B cell (primary cell): ENCODE measurements at regions of chr22 and their contacts with region 1.

Region 1: GRCh38 chr22:29603358-29604075 is at the start of gene NF2:
- DNase-seq: peak; percentile 99
- ATAC-seq: peak; percentile 97
- H3K4me3 ChIP-seq: peak within 1 kb of the TSS; percentile 82 to 99 (median 95)
- H3K4me3 Mint-ChIP-seq: peak within 1 kb of the TSS; percentile 98
- H3K27ac ChIP-seq: peak within 1 kb of the TSS; percentile 81 to 92
- H3K27ac Mint-ChIP-seq: peak within 1 kb of the TSS; percentile 97
- H3K4me1 ChIP-seq: peaks cover 9 to 15% of the 10 kb centered on the region in 2 donors
- H3K4me1 Mint-ChIP-seq: peaks cover 20% of the 10 kb centered on the region
- H3K27me3 ChIP-seq: no peaks in the 10 kb centered on the region
- H3K27me3 Mint-ChIP-seq: no peaks in the 10 kb centered on the region
- CTCF ChIP-seq: no peak
- total RNA-seq, gene NF2: 26.6 and 27.7 TPM in 2 replicates

Region 2: DNA sequence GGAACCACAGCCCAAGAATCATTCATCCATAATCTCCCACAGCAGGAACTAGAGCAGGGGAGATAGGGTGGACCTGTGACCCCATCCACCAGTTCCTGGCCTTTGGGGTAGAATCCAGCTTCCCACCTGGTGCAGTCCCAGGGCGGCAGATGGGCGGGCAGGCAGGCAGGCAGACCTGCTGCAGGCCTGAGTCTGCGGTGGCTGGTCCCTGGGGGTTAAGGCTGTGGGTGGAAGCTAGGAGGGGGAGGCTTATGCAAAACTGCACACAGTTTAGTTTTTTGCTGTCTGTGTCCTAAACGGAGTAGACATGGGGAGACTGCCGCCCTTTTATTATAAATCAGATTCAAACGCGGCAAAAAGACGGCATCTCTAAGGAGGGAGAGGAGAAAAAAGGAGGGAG is 128.0 kb before region 1 on chr22:
- CTCF ChIA-PET with region 1: no interaction called
- POLR2A ChIA-PET with region 1: no interaction called
- intact Hi-C with region 1: loop called (anchors 1 kb)
- DNase-seq: peak; percentile 73
- ATAC-seq: peak; percentile 94
- H3K4me3 ChIP-seq: no peak overlapping the region
- H3K4me3 Mint-ChIP-seq: peak overlapping the region; percentile 35
- H3K27ac ChIP-seq: no peak overlapping the region
- H3K27ac Mint-ChIP-seq: peak overlapping the region; percentile 34
- H3K4me1 ChIP-seq: peaks cover 31 to 33% of the 10 kb centered on the region in 2 donors
- H3K4me1 Mint-ChIP-seq: peaks cover 45% of the 10 kb centered on the region
- H3K27me3 ChIP-seq: peaks cover 0 to 49% (median 25%) of the 10 kb centered on the region in 4 experiments
- H3K27me3 Mint-ChIP-seq: peaks cover 39% of the 10 kb centered on the region
- CTCF ChIP-seq: no peak

Region 3: GRCh38 chr22:29580200-29580810 is 23.2 kb before region 1 on chr22:
- CTCF ChIA-PET with region 1: no interaction called
- POLR2A ChIA-PET with region 1: no interaction called
- intact Hi-C with region 1: loop called (anchors 1 kb)
- DNase-seq: peak; percentile 26
- ATAC-seq: no peak
- H3K4me3 ChIP-seq: peak overlapping the region; percentile 21 to 81 (median 64)
- H3K4me3 Mint-ChIP-seq: peak overlapping the region; percentile 97
- H3K27ac ChIP-seq: no peak overlapping the region
- H3K27ac Mint-ChIP-seq: peak overlapping the region; percentile 97
- H3K4me1 ChIP-seq: peaks cover 5 to 10% of the 10 kb centered on the region in 2 donors
- H3K4me1 Mint-ChIP-seq: peaks cover 17% of the 10 kb centered on the region
- H3K27me3 ChIP-seq: no peaks in the 10 kb centered on the region
- H3K27me3 Mint-ChIP-seq: no peaks in the 10 kb centered on the region
- CTCF ChIP-seq: no peak

Region 4: GRCh38 chr22:29625090-29625825 is 21.7 kb after region 1 on chr22:
- CTCF ChIA-PET with region 1: interaction called, 20 read pairs
- POLR2A ChIA-PET with region 1: no interaction called
- intact Hi-C with region 1: no loop called
- DNase-seq: peak; percentile 59
- ATAC-seq: peak; percentile 28
- H3K4me3 ChIP-seq: no peak overlapping the region
- H3K4me3 Mint-ChIP-seq: no peak overlapping the region
- H3K27ac ChIP-seq: no peak overlapping the region
- H3K27ac Mint-ChIP-seq: no peak overlapping the region
- H3K4me1 ChIP-seq: peaks cover 26 to 27% of the 10 kb centered on the region in 2 donors
- H3K4me1 Mint-ChIP-seq: peaks cover 48% of the 10 kb centered on the region
- H3K27me3 ChIP-seq: no peaks in the 10 kb centered on the region
- H3K27me3 Mint-ChIP-seq: no peaks in the 10 kb centered on the region
- CTCF ChIP-seq: peak; percentile 98

Region 5: GRCh38 chr22:29883045-29883774 is 279.7 kb after region 1 on chr22 and contains the start of gene MTMR3:
- CTCF ChIA-PET with region 1: no interaction called
- POLR2A ChIA-PET with region 1: no interaction called
- intact Hi-C with region 1: loop called (anchors 1 kb)
- DNase-seq: peak; percentile 94
- ATAC-seq: peak; percentile 80
- H3K4me3 ChIP-seq: peak within 1 kb of the TSS; percentile 76 to 99 (median 87)
- H3K4me3 Mint-ChIP-seq: peak within 1 kb of the TSS; percentile 92
- H3K27ac ChIP-seq: peak within 1 kb of the TSS; percentile 71 to 91
- H3K27ac Mint-ChIP-seq: peak within 1 kb of the TSS; percentile 86
- H3K4me1 ChIP-seq: peaks cover 21% of the 10 kb centered on the region in 2 donors
- H3K4me1 Mint-ChIP-seq: peaks cover 12% of the 10 kb centered on the region
- H3K27me3 ChIP-seq: no peaks in the 10 kb centered on the region
- H3K27me3 Mint-ChIP-seq: no peaks in the 10 kb centered on the region
- CTCF ChIP-seq: peak; percentile 47
- total RNA-seq, gene MTMR3: 67.8 and 76.5 TPM in 2 replicates